ENCODE measurements at regions of chr5 and their contacts with region 1.

Region 1: GRCh38 chr5:171644536-171644935 is 141.1 kb upstream of the SMIM23 start:
- DNase-seq: peak in 1 of 2 donors; percentile 22
- ATAC-seq: no peak
- H3K4me3 ChIP-seq: no peak overlapping the region
- H3K27ac ChIP-seq: no peak overlapping the region
- H3K4me1 ChIP-seq: peaks cover 0 to 26% (median 13%) of the 10 kb centered on the region in 9 donors
- H3K27me3 ChIP-seq: no peaks in the 10 kb centered on the region
- CTCF ChIP-seq: no peak

Region 2: DNA sequence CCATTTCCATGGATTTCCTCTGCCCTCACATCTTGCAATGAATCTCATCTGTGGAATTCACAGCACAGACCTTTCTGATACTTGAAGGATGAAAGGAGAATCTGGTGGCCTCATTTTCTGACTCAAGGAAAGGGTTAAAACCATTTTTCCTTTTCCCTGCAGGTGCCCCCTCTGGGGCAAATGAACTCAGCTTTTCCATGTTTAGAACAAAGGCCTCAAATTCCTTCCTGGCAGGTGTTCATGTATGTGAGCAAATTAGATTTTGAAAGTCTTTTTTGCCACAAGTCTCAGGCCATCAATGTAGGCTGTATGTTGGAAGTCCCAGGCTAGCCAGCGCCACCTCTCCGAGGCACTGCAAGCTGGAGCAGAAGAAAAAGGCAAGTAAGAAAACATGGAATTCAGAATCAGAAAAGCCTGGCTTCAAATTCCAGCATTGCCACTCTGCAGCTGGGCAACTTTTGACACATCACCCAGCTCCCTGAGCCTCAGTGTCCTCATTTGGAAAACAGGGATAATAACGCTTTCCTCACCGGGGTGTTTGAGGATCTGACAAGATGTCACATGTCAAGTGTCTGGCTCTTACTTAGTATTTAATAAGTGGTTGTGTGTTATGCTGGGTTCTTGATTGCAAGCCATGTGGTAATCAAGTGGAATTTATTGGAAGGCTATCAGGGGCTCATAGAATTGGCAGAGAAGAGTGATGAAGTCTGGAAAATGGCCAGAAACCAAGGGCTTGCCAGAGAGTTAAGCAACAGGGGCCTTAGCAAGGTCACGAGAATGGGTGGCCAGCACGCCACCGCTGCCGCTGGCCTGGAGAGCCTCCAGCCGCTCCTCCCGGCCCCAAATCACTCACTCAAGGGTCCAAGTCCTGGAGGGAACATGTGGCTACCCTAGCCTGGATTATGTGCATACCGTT is 92.7 kb after region 1 on chr5:
- intact Hi-C with region 1: loop called in 6 of 10 experiments (anchors 1 to 10 kb)
- DNase-seq: peak; percentile 71 to 73
- ATAC-seq: peak; percentile 75 to 88 (median 82)
- H3K4me3 ChIP-seq: peak overlapping the region in 6 of 10 donors; percentile 6 to 45 (median 34)
- H3K27ac ChIP-seq: peak overlapping the region in 9 of 10 donors; percentile 38 to 81 (median 78)
- H3K4me1 ChIP-seq: peaks cover 5 to 28% (median 14%) of the 10 kb centered on the region in 9 donors
- H3K27me3 ChIP-seq: no peaks in the 10 kb centered on the region
- CTCF ChIP-seq: peak in 3 of 9 donors; percentile 31 to 40 (median 34)